Sigmoid colon (tissue), 7 donors: ENCODE measurements at regions of chr3 and their contacts with region 1.

Region 1: DNA sequence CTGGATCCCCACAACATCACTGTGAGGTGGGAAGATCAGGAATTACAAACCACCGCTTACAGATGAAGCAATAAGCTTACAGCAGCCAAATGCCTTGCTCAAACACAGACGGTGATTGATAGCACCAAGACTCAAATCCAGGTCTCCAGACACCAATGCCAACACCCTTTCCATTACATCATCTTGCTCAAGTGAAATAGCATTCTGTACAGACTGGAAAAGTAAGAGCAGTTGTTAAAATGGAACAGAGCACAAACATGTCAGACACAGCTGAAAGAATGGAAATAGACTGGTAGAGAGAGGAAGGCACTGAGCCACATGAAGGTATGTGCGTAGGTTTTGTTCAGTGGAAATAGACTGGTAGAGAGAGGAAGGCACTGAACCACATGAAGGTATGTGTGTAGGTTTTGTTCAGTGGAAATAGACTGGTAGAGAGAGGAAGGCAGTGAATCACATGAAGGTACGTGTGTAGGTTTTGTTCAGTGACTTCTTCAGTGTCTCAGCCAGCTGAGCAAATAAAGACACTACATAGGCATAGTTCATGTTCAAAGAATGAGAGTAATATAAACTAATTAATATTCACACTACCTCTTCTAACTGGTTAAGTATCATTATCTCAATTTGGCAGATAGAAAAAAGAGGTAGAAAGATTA is 15.6 kb downstream of the CLDN1 start:
- DNase-seq: peak; percentile 80
- H3K4me3 ChIP-seq: no peak overlapping the region
- H3K27ac ChIP-seq: peak overlapping the region in 1 of 4 donors; percentile 31
- H3K4me1 ChIP-seq: peaks cover 0 to 11% (median 3%) of the 10 kb centered on the region in 4 donors
- H3K27me3 ChIP-seq: no peaks in the 10 kb centered on the region
- CTCF ChIP-seq: no peak
- EP300 ChIP-seq: peak in 2 of 4 donors; percentile 36 to 57
- POLR2A ChIP-seq: no peak

Region 2: DNA sequence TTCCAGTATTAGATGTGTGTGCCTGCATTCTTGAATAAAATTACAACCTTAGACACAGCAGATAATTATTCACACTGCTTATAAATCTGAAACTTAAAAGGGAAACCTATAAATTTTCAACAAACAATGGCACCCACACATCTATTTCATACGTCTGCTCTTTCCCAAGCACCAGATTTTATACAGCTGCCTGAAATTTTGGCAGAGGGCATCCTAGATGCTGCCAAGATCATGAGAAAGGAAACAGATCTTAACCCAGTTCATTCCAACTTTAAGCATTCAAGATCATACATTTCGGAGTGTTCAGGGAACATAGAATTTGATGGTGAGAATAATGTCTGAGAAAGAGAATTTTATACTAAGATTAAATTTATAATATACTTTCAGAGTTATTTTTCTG is 37.5 kb before region 1 on chr3:
- intact Hi-C with region 1: loop called (anchors 2 kb)
- DNase-seq: no peak
- H3K4me3 ChIP-seq: no peak overlapping the region
- H3K27ac ChIP-seq: no peak overlapping the region
- H3K4me1 ChIP-seq: peaks cover 0 to 20% (median 0%) of the 10 kb centered on the region in 4 donors
- H3K27me3 ChIP-seq: no peaks in the 10 kb centered on the region
- CTCF ChIP-seq: no peak
- EP300 ChIP-seq: no peak
- POLR2A ChIP-seq: no peak

Region 3: GRCh38 chr3:191131305-191131704 is 824.7 kb after region 1 on chr3:
- intact Hi-C with region 1: no loop called
- DNase-seq: no peak
- H3K4me3 ChIP-seq: no peak overlapping the region
- H3K27ac ChIP-seq: no peak overlapping the region
- H3K4me1 ChIP-seq: no peaks in the 10 kb centered on the region
- H3K27me3 ChIP-seq: no peaks in the 10 kb centered on the region
- CTCF ChIP-seq: no peak
- EP300 ChIP-seq: no peak
- POLR2A ChIP-seq: no peak